A673 (cell line): ENCODE measurements at regions of chr1 and their contacts with region 1.

Region 1: DNA sequence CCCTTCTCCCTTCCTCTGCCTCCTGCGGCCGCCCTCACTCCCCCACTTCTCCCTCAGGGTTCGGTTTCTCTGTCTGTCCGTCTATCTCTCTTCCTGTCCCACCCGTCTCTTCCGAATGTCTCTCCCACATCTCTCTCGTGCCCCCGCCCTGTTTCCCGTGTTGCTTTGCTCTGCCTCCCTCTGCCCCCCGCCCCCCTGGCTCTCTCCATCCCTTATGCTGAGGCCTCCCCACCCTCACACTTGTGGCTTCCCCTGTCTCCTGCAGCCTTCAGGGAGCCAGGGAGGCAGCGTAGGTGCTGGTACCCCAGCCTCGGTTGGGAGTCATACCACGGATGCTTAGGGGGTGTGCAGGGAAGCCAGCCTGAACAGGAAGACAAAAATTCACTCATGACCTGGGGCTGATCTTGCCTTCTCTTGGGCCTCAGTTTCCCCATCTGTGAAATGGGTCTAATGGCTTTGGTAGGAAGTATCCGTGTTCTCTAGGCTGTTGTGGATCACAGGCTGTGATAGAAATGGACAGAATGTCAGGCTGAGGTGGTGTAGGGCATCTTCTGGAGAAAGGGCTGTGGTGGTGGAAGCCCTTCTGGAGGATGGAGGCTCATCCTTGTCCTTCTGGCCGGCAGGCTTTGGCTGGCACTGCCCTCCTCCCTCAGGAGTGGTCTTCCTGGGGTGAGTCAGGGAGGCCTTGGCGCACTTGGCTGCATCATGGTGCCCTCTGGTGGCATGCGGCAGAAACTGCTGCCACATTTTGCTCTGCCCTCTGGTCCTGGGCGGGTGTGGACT is 55.5 kb downstream of the FOXO6 start:
- DNase-seq: peak; percentile 75
- H3K4me3 ChIP-seq: no peak overlapping the region
- H3K27ac ChIP-seq: no peak overlapping the region
- H3K4me1 ChIP-seq: no peaks in the 10 kb centered on the region
- H3K27me3 ChIP-seq: no peaks in the 10 kb centered on the region
- CTCF ChIP-seq: peak; percentile 89

Region 2: GRCh38 chr1:40915581-40915980 is 501.2 kb before region 1 on chr1:
- CTCF ChIA-PET with region 1: no interaction called
- POLR2A ChIA-PET with region 1: no interaction called
- intact Hi-C with region 1: no loop called
- DNase-seq: no peak
- H3K4me3 ChIP-seq: no peak overlapping the region
- H3K27ac ChIP-seq: no peak overlapping the region
- H3K4me1 ChIP-seq: no peaks in the 10 kb centered on the region
- H3K27me3 ChIP-seq: no peaks in the 10 kb centered on the region
- CTCF ChIP-seq: no peak

Region 3: DNA sequence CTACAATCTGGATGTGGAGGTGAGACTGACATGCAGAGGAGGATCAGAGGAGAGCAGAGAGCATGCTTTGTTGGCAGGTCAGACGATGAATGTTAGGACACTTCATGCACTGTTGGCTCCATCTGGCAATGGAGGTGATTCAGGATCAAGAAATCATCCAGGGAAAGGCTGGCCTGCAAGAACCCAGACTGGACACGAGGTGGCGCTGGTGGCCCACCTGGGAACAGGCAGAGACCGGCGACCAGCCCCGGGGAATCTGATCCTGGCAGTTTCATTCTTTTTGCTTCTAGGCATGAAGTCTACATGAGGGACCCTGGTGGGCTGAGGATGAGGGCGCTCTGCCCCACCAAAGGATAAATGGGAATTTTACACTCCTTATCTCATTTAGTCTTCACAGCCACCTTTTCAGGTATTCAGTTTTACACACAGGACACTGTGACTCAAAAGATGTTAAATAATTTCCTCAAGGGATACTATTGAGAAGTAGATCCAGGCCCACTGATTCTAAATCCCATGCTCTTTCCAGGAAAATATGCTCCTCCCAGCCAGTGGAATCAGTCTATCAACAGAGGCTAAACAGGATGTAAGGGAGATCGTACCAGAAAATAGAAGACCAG is 148.5 kb before region 1 on chr1:
- CTCF ChIA-PET with region 1: no interaction called
- POLR2A ChIA-PET with region 1: no interaction called
- intact Hi-C with region 1: loop called (anchors 2 kb)
- DNase-seq: peak; percentile 73
- H3K4me3 ChIP-seq: no peak overlapping the region
- H3K27ac ChIP-seq: no peak overlapping the region
- H3K4me1 ChIP-seq: no peaks in the 10 kb centered on the region
- H3K27me3 ChIP-seq: no peaks in the 10 kb centered on the region
- CTCF ChIP-seq: peak; percentile 94

Region 4: DNA sequence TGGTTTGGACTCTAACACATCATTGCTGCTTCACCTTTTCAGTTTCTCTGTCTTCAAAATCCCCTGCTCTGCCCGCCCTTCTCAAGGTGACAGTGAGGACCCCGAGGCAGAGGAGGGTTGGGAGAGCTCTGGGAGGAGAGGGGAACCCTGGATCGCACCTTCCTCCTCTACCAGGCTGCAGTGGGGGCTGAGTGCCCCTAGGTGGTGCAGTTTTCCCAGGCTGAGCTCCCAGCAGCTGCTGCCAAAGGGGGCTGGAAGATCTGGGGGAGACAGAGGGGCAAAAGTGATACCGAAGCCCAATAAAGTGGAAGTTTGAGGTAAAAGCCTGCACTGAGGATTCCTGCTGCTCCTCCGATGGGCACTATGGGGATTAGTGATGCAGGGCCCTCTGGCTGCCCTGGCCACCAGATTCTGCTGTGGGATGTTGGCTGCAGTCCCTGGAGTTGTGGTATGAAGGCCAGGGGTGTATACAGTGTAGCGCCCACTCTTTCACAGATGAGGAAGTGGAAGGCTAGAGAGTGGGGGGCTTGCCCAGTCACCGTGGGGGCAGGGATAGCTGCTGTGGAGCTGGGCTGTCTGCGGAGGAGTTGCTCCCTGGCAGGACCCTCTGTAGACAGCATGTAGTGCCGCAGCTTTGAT is 133.9 kb before region 1 on chr1:
- CTCF ChIA-PET with region 1: interaction called, 7 read pairs
- POLR2A ChIA-PET with region 1: no interaction called
- intact Hi-C with region 1: loop called (anchors 2 kb)
- DNase-seq: peak; percentile 56
- H3K4me3 ChIP-seq: no peak overlapping the region
- H3K27ac ChIP-seq: no peak overlapping the region
- H3K4me1 ChIP-seq: no peaks in the 10 kb centered on the region
- H3K27me3 ChIP-seq: no peaks in the 10 kb centered on the region
- CTCF ChIP-seq: peak; percentile 90

Region 5: DNA sequence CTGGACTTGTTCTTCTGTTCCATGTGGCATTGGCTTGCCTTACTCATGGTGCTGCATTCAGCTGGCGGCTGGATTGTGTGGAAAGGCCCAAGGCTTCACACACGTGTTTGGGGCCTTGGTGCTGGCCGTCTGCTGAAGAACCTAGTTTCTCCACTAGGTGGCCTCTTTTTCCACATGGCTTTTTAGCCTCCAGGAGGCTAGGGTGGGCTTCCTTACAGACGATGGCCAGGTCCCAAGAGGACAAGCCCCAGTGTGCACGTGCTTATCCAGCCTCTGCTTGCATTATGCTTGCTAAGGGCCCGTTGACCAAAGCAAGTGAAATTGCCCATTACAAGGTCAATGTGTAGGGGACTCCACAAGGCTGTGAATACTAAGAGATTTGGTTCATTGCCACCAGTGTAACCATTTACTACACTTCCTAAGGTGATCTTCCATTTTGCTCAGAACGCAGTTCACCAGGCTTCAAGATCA is 103.0 kb before region 1 on chr1:
- CTCF ChIA-PET with region 1: interaction called, 3 read pairs
- POLR2A ChIA-PET with region 1: no interaction called
- intact Hi-C with region 1: loop called (anchors 2 kb)
- DNase-seq: peak; percentile 70
- H3K4me3 ChIP-seq: no peak overlapping the region
- H3K27ac ChIP-seq: no peak overlapping the region
- H3K4me1 ChIP-seq: no peaks in the 10 kb centered on the region
- H3K27me3 ChIP-seq: no peaks in the 10 kb centered on the region
- CTCF ChIP-seq: peak; percentile 81

Region 6: DNA sequence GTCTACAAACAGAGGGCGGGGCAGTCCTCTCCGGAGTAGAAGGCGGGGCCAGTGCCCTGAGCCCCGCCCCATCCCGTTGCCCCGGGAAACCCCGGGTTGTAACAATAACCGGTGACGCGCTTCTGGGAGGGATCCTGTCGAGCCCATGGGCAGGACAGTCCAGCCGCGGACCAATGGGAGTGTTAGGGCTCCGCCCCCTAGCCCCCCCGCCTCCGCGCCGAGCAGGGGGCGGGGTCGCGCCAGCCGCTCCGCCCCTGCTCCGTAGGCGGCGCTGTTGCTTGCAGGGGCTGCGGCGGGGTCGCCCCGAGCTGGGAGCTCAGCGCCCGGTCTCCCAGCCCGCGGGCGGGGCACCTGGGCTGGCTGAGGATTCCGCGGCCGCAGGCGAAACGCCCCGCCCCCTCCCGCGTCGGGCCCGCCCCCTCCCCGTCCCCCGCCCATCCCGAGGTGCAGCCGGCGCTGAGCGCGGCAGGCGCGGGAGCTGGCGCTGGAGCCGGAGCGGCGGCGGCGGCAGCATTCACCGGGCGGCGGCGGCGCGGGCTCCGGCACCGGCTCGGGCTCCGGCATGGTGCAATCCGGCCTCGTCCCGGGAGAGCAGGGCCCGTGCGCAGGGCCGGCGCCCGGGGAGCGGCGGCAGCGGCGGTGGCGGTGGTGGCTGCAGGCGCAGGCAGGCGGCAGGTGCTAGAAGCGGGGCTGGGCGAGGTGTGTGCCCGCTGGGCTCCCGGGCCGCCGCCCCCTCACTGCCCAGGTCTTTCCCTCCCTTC is 55.6 kb before region 1 on chr1 and contains the start of gene FOXO6:
- CTCF ChIA-PET with region 1: no interaction called
- POLR2A ChIA-PET with region 1: no interaction called
- intact Hi-C with region 1: loop called (anchors 5 kb)
- DNase-seq: peak; percentile 98
- H3K4me3 ChIP-seq: peak within 1 kb of the TSS; percentile 77
- H3K27ac ChIP-seq: peak within 1 kb of the TSS; percentile 73
- H3K4me1 ChIP-seq: peaks cover 37% of the 10 kb centered on the region
- H3K27me3 ChIP-seq: no peaks in the 10 kb centered on the region
- CTCF ChIP-seq: peak; percentile 56
- total RNA-seq, gene FOXO6: 6.1 and 7.6 TPM in 2 replicates